Heart right ventricle (tissue), 16 donors: ENCODE measurements at regions of chr11 and their contacts with region 1.

Region 1: GRCh38 chr11:79236541-79236971 is 204.3 kb downstream of the TENM4 start:
- DNase-seq: peak in 1 of 2 donors; percentile 25
- ATAC-seq: peak in 7 of 8 donors; percentile 37 to 81 (median 65)
- H3K4me3 ChIP-seq: peak overlapping the region in 2 of 10 donors; percentile 8 to 15
- H3K27ac ChIP-seq: peak overlapping the region in 5 of 10 donors; percentile 37 to 45 (median 41)
- H3K4me1 ChIP-seq: peaks cover 0 to 36% (median 17%) of the 10 kb centered on the region in 9 donors
- H3K27me3 ChIP-seq: no peaks in the 10 kb centered on the region
- CTCF ChIP-seq: no peak

Region 2: GRCh38 chr11:79461144-79461543 is 224.6 kb after region 1 on chr11:
- intact Hi-C with region 1: loop called in 1 of 10 experiments (anchors 10 kb)
- DNase-seq: peak in 1 of 2 donors; percentile 27
- ATAC-seq: peak in 7 of 8 donors; percentile 52 to 81 (median 69)
- H3K4me3 ChIP-seq: no peak overlapping the region
- H3K27ac ChIP-seq: no peak overlapping the region
- H3K4me1 ChIP-seq: no peaks in the 10 kb centered on the region
- H3K27me3 ChIP-seq: peaks cover 0 to 14% (median 6%) of the 10 kb centered on the region in 7 donors
- CTCF ChIP-seq: peak in 8 of 9 donors; percentile 15 to 65 (median 54)